Activated naive CD8-positive, alpha-beta T cell treated with anti-CD3 and anti-CD28 coated beads, Interleukin-2, amount 10 ng/mL, durations not matched to agents 7 days and 5 days (primary cell): ENCODE measurements at regions of chr13 and their contacts with region 1.

Region 1: DNA sequence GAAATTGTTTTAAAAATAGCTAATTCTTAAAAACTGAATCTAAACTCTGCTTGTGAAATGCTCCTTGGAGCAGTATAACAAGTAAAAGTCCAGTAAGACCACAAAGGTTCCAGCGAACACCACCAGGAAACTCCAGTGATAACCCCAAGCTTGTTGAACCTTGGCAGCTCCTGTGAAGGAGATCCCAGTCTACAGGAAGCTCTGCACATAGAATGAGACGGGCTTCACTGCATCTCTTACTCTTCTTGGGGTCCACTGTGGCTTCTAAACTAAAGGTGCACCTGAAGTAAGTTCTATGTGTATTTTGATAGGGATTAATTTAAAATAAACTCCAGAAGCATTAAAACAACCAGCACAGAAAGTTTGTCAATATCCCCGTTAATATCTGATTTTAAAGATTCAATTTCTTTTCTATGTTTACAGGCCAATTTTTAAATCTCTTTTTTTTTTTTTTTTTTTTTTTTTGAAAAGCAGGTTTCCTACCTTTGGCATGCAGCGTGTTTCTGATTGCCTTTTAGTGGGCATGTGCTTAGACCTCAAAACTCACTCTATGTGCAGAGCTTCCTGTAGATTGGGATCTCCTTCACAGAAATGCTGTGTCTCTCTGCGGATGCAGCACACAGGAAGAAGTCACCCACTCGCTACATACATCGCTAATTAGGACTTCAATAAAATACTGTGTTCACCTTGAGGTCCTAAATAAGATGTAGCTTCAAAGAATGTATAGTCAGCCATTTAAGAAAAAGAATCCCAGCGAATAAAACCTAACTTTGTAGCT is 508.5 kb downstream of the KLF12 start:
- DNase-seq: no peak
- ATAC-seq: peak; percentile 100
- H3K4me3 Mint-ChIP-seq: peak overlapping the region; percentile 67
- H3K27ac Mint-ChIP-seq: peak overlapping the region; percentile 84
- H3K4me1 Mint-ChIP-seq: peaks cover 37% of the 10 kb centered on the region
- H3K27me3 Mint-ChIP-seq: no peaks in the 10 kb centered on the region

Region 2: GRCh38 chr13:73661687-73662425 is 36.1 kb after region 1 on chr13:
- POLR2A ChIA-PET with region 1: no interaction called
- DNase-seq: no peak
- ATAC-seq: no peak
- H3K4me3 Mint-ChIP-seq: no peak overlapping the region
- H3K27ac Mint-ChIP-seq: no peak overlapping the region
- H3K4me1 Mint-ChIP-seq: peaks cover 3% of the 10 kb centered on the region
- H3K27me3 Mint-ChIP-seq: no peaks in the 10 kb centered on the region

Region 3: DNA sequence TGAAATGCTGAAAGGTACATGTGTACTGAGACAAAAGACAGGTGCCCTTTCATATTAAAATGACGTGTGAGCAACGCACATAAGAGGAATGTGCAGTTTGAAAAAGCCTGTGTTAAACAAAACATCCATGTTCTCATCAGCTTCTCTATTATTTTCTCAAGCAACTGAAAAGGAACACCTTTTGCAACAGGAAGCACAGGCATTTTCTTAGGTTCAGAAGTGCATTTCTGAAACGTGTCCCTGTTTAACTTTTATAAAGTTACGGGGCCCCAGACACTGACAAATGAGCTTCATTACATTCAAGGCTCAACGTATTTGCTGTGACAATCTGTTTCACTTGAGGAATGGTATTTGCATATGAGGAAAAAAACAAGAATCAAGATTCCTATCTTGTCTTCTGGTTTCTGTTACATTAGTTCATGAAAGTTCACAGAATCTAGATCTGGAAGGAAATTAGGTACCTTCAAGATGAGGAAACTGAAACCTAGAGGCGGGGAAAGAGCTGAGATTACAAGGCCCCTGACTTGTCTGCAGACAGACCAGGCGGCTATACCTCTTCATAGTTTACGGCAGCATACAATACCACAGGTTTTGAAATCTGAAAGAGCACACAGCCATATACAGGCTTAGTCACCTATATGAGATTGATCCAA is 76.8 kb after region 1 on chr13:
- POLR2A ChIA-PET with region 1: interaction called, 10 read pairs
- DNase-seq: no peak
- ATAC-seq: peak; percentile 99
- H3K4me3 Mint-ChIP-seq: peak overlapping the region; percentile 78
- H3K27ac Mint-ChIP-seq: peak overlapping the region; percentile 91
- H3K4me1 Mint-ChIP-seq: peaks cover 47% of the 10 kb centered on the region
- H3K27me3 Mint-ChIP-seq: no peaks in the 10 kb centered on the region

Region 4: GRCh38 chr13:73754727-73755292 is 129.1 kb after region 1 on chr13:
- POLR2A ChIA-PET with region 1: no interaction called
- DNase-seq: no peak
- ATAC-seq: no peak
- H3K4me3 Mint-ChIP-seq: no peak overlapping the region
- H3K27ac Mint-ChIP-seq: no peak overlapping the region
- H3K4me1 Mint-ChIP-seq: peaks cover 9% of the 10 kb centered on the region
- H3K27me3 Mint-ChIP-seq: no peaks in the 10 kb centered on the region